Dorsolateral prefrontal cortex (tissue), 120 donors: ENCODE measurements at regions of chr10 and their contacts with region 1.

Region 1: DNA sequence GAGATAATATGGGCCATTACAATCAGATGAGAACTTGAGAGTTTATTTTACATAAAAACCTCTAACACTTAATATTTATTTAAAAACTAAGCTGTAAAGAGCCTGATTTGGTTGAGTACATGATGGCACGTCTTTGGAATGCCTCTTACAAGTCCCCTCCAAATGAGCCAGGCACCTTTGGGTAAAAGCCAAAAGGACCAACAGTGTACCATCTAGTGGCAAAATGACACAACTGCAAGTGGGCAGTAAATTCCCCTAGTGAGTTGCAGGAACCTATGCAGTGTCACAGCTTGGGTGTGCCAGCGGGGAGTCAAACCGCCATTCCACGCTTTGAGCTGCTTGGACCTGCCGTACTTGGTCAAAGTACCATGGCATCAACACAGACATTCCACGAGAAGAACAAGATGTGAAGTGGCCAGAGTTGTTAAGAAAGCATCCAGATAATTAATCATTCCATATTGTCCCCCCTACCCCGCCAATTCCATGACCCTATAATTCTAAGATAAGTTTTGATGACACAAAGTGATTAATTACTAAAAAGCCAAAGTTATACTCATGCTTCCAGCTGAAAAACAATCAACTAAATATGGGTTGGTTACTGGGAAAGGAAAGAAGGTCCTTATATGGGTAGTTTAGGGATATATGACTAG is 115.2 kb downstream of the SORBS1 start:
- DNase-seq: peak in 1 of 10 donors; percentile 61
- H3K4me3 ChIP-seq: no peak overlapping the region
- H3K27ac ChIP-seq: peak overlapping the region in 57 of 59 donors; percentile 5 to 94 (median 76)
- H3K27me3 ChIP-seq: peaks cover 0 to 4% (median 0%) of the 10 kb centered on the region in 45 donors
- CTCF ChIP-seq: peak; percentile 47 to 89 (median 78)

Region 2: DNA sequence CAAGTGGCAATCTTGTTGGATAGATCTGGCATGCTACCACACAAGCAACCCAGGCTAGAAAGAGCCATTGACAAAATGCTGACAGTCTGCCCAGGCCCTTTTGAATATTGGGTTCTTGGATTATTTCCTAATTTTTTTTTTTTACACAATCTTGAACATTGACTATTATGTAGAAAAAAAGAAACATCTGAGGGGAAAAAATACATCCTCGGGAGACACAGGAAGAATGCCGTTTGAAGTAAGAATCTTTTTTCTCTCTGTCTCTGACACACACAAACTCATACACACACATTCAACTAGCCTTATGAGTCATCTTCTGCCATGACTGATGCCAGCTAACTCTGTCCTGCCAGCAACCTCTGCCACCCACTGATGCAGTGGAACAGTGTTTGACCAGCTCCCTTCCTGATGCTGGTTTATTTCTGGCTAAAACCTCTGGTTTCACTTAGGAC is 68.0 kb after region 1 on chr10:
- intact Hi-C with region 1: loop called in 1 of 2 experiments (anchors 5 kb)
- DNase-seq: peak in 9 of 10 donors; percentile 40 to 83 (median 72)
- H3K4me3 ChIP-seq: peak overlapping the region in 11 of 59 donors; percentile 2 to 31 (median 15)
- H3K27ac ChIP-seq: peak overlapping the region; percentile 42 to 94 (median 81)
- H3K27me3 ChIP-seq: no peaks in the 10 kb centered on the region
- CTCF ChIP-seq: peak in 3 of 56 donors; percentile 9 to 41 (median 13)